ENCODE measurements at regions of chr6 and their contacts with region 1.

Region 1: GRCh38 chr6:144284783-144285547 is at the start of gene UTRN:
- DNase-seq: peak; percentile 92
- ATAC-seq: peak; percentile 86
- total RNA-seq, gene UTRN: 69.2 TPM

Region 2: GRCh38 chr6:144104898-144105487 is 180.0 kb before region 1 on chr6:
- intact Hi-C with region 1: loop called (anchors 1 kb)
- DNase-seq: no peak
- ATAC-seq: peak; percentile 86

Region 3: DNA sequence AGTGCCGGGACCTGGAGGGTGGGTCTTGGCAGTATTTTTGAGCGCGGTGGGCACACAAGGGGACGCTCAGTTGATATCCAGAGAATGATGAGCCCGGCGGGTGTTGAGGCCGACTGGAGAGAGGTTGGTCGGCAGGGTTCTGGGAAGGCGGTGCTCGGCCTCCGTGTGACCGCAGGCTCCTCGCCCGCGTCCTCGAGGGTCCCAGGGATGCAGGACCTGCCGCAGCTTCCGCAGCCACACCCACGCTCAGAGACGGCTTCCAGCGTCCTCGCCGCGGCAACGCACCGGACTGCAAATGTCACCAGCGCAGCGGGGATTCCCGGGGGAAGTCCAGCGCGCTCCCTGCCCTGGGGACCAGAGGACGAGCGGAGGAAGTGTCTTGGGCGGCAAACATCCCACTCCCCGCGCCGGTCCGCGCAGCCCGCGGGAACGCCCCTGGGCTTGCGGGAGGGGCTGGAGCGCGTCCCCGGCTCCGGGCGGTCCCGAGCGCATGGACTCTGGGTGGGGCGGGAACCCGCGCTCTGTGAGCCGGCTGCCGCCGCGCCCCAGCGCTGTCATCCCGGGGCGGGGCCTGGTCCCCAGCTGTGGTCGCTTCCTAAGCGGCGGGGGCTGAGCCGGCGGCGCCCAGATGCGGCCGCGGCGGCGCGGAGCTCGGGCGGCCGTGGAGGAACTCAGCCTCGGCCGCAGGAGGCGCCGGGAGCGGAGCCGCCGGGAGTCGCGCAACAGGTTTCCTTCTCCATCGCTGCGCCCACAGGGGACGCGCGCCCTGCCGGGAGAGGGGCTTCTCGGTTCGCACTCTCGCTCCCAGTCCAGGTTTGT is 134.9 kb before region 1 on chr6 and contains the start of gene STX11:
- intact Hi-C with region 1: loop called (anchors 2 kb)
- DNase-seq: peak; percentile 90
- ATAC-seq: peak; percentile 97
- total RNA-seq, gene STX11: 11.1 TPM

Region 4: DNA sequence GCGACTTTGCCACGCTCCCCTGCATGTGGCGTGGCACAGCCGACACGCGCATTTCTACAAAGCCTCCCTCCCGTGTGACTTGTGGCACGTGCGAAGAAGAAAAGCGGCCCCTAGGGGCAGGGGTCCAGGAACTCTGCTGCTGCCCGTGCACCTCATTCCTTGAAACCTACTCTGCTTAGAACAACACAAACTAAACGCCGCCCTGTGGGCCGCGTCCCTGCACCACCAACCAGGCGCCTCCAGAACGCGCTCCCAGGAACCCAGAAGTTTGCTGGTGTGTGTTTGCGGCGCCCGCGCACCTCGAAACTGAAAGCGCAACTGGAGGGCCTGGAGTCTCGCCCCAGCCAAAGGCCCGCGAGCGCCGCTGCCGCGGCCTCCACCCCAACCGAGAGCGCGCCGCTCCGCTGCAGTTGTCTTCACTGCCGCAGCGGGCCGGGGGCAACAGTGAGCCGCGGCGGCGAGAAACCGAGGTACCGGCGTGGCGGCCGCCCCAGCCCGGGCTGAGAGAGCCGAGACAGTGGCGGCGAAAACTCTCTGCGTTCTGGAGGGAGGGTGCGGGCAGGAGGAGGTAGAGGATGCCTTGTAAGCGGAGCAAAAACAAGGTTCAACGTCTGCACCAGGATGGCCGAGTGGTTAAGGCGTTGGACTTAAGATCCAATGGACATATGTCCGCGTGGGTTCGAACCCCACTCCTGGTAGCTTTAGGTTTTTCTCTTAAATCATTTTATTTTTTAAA is 68.9 kb before region 1 on chr6:
- intact Hi-C with region 1: loop called (anchors 1 kb)
- DNase-seq: peak; percentile 96
- ATAC-seq: peak; percentile 94

Region 5: GRCh38 chr6:144266091-144266649 is 18.8 kb before region 1 on chr6:
- intact Hi-C with region 1: loop called (anchors 2 kb)
- DNase-seq: peak; percentile 76
- ATAC-seq: peak; percentile 96

Region 6: DNA sequence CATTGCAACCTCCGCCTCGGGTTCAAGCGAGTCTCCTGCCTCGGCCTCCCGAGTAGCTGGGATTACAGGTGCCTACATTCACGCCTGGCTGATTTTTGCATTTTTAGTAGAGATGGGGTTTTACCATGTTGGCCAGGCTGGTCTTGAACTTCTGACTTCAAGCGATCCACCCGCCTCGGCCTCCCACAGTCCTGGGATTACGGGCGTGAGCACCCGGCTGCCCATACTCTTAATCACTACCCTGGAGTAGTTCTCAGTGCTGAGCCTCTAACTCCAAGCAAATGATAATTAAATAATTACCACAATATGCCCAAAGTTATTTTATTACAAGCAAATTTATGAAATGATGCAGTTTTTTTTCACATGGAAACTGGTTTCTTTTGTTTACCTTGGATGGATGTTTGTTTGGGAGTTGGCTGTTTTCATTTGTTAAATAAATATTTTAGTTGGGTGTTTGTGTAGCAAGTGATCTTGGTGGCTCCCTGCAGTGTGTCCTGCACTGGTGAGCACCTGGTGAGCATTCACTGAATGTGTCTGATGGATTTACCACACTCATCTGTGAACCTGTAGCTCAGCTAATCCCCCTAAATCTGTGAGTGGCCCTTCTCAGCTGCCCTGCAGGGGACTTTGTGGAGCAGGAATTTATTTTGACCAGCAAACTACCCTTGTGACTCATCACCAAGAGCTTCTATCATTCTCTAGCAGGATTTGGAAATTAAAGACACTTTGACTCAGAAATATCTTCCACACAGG is 37.0 kb after region 1 on chr6:
- intact Hi-C with region 1: no loop called
- DNase-seq: no peak
- ATAC-seq: no peak

Region 7: DNA sequence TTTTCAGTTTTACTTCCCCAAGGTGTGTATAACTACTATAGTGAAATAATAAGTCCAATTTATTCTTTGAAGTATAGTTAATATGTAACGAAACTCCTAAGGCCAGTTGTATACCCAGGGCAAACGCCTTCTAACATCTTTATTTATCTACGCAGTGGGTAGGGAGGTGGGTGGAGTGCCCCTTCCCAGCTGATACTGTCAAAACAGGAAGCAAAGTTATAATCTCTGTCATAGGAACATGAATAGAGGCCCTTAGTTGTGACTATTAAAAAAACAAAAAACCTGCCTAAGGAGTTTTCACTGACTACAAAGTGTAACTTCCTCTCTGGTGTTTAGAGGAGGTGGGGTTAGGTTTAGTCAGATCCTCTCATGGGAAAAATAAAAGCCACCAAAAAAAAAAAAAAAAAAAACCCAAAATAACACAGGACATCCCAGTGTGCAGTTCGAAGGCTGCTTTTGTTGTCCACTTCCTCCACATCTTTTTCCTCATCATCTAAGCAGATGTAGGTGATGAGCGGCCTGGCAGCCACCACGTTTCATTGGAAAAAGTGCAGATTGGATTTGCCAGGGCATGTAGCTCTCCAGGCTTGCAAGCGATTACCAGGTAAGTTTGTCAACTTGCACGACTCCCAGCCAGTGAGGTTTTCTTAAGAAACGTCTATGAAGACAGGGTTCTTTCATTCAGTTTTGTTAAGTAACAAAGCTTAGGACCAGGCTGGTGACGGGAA is 58.9 kb after region 1 on chr6:
- intact Hi-C with region 1: loop called (anchors 5 kb)
- DNase-seq: no peak
- ATAC-seq: peak; percentile 56

Region 8: DNA sequence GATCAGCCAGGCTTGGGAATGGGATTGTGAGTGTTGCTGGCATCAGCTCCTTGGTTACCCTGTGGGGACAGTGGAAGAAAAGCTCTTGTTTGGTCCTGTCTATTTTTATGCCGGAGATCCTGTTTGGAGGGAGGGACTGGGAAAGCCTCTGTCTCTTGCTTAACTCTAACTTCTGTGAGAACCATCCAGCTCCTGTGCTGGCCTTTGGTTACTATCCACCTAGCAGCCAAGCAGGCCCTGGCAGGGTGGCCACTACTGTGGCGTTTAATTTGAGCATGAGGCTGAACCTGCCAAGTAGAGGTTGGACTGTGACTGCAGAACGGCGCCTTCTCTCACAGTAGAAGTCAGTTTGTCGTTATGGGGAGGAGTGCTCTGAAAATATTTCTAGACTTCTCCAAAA is 193.5 kb after region 1 on chr6:
- intact Hi-C with region 1: loop called (anchors 2 kb)
- DNase-seq: peak; percentile 75
- ATAC-seq: peak; percentile 97

Measured in Right ventricle myocardium inferior (tissue), 1 donor.